Cardiac septum (tissue), 1 donor: ENCODE measurements at regions of chr6 and their contacts with region 1.

Region 1: GRCh38 chr6:28349892-28350737 is at the start of gene ZKSCAN3:
- DNase-seq: peak; percentile 96
- total RNA-seq, gene ZKSCAN3: 5.3 TPM

Region 2: DNA sequence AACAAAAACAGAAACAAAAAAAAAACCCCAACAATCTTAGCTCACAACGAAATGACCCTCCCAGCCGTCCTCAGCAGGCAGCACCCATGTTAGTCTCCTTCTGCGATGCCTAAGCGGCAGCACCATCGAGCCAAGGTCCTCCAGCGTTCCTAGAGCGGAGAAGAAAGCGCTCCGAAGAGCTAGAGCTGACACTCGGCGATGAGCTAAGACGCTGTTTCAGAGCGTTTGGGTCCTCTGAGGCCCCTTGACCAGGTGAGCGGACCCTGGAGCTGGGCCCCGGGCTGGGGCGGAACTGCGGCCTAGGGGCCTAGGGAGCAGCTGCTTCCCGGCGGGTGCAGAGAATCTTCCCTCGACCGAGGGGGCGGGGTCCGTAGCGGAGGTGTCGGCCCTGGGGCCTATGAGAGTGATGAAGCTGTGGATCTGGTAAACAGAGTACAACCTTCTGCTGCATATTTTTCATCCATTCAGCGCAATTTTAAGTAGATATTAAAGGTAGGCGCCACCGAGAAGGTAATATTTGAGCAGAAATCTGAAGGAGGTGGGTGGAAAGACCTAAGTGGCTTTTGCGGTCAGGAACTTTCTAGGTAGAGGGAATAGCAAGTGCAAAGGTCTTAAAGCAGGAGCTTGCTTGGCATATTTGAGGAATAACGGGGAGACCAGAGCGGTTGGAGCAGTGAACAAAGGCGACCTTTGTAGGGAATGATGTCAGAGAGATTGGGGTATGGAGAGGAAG is 83.0 kb before region 1 on chr6 and contains the start of gene ZSCAN26:
- intact Hi-C with region 1: loop called (anchors 2 kb)
- DNase-seq: peak; percentile 89
- total RNA-seq, gene ZSCAN26: 13.4 TPM

Region 3: DNA sequence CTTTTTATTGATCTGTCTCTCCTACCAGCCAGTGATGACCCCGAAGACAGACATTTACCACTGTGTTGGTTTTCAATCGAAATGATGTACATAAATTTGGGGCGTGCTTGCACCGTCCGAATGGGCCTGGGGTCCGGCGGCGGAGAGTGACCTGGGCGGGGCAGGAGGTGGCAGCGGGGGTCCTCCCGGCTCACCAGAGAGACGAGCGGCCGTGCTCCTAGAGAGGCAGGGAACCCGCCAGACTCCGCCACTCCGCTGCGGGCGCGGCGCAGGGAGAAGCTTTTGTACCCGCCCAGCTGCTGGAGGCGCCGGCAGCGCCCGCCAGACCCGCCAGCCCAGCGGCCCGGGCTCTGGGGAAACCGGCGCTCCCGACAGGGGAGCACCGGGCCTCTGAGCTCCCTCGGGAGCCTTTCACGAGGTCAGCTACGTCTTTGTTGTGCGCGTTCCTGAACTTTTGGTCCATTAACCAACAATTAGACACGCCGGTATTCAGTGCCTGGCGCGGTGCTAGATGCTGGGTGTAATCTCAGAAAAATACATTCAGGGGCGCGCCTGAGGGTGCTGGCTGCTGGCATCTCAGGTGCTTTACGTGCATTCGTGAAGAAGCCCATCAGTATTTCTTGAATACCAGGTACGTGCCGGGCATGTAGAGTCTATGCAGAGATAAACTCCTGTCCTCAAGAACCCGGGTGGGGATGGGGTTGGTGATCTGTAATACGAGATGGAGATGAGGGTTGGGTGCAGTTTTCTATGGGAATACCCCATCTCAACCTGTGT is 68.6 kb before region 1 on chr6 and contains the start of gene PGBD1:
- intact Hi-C with region 1: loop called (anchors 2 kb)
- DNase-seq: peak; percentile 82
- total RNA-seq, gene PGBD1: 3.8 TPM